ENCODE measurements at regions of chr22 and their contacts with region 1.

Region 1: GRCh38 chr22:41132550-41132949 is 40.2 kb downstream of the EP300 start:
- H3K4me3 ChIP-seq: no peak overlapping the region
- H3K27ac ChIP-seq: no peak overlapping the region
- H3K4me1 ChIP-seq: no peaks in the 10 kb centered on the region
- CTCF ChIP-seq: no peak

Region 2: DNA sequence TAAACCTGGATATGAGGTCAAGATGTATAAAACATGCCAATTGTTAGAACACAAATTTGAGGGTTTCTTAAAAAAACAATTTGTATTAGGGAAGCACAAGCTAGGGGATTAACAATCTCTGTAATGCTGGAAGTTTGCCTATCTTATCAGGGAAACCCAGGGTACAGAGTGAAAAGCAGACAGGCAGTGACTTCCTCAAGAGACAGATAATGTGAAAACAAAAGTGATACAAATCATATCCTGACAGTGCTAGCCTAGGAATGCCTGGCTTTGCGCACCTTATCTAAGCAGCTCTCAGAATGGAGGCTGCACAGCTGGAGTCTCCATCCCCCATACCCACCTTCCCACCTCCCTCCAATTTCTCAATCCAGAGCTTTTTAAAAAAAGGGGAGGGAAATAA is 203.9 kb before region 1 on chr22:
- CTCF ChIA-PET with region 1: interaction called, 9 read pairs
- POLR2A ChIA-PET with region 1: interaction called, 10 read pairs
- H3K4me3 ChIP-seq: no peak overlapping the region
- H3K27ac ChIP-seq: no peak overlapping the region
- H3K4me1 ChIP-seq: peaks cover 5% of the 10 kb centered on the region
- CTCF ChIP-seq: no peak